ENCODE measurements at regions of chr13 and their contacts with region 1.

Region 1: GRCh38 chr13:41668130-41668757 is 210.9 kb downstream of the RGCC start:
- DNase-seq: peak; percentile 52
- H3K4me3 Mint-ChIP-seq: no peak overlapping the region
- H3K27ac Mint-ChIP-seq: no peak overlapping the region
- H3K4me1 Mint-ChIP-seq: no peaks in the 10 kb centered on the region
- H3K27me3 Mint-ChIP-seq: no peaks in the 10 kb centered on the region

Region 2: GRCh38 chr13:41658056-41658661 is 10.1 kb before region 1 on chr13:
- CTCF ChIA-PET with region 1: interaction called, 10 read pairs
- intact Hi-C with region 1: no loop called
- DNase-seq: no peak
- H3K4me3 Mint-ChIP-seq: no peak overlapping the region
- H3K27ac Mint-ChIP-seq: no peak overlapping the region
- H3K4me1 Mint-ChIP-seq: peaks cover 19% of the 10 kb centered on the region
- H3K27me3 Mint-ChIP-seq: no peaks in the 10 kb centered on the region

Region 3: DNA sequence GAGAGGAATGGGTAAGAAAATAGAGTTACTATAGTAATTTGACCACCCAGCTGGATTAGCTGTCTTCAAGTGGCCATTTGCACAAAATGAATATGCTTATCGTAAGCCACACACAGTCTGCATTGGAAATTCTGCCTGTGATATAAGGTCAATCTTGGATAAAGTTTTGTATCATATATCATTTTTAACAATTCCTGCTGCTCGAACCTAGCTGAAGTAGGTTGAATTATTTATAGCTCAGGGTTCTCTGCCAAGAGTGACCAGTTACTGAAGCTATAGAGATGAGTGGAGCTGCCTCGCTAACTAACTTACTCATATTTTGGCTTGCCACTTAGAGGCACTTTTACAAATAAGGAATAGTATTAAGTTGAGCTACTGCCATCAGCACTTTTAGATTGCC is 10.0 kb after region 1 on chr13:
- CTCF ChIA-PET with region 1: interaction called, 10 read pairs
- intact Hi-C with region 1: no loop called
- DNase-seq: no peak
- H3K4me3 Mint-ChIP-seq: no peak overlapping the region
- H3K27ac Mint-ChIP-seq: no peak overlapping the region
- H3K4me1 Mint-ChIP-seq: peaks cover 8% of the 10 kb centered on the region
- H3K27me3 Mint-ChIP-seq: no peaks in the 10 kb centered on the region

Region 4: DNA sequence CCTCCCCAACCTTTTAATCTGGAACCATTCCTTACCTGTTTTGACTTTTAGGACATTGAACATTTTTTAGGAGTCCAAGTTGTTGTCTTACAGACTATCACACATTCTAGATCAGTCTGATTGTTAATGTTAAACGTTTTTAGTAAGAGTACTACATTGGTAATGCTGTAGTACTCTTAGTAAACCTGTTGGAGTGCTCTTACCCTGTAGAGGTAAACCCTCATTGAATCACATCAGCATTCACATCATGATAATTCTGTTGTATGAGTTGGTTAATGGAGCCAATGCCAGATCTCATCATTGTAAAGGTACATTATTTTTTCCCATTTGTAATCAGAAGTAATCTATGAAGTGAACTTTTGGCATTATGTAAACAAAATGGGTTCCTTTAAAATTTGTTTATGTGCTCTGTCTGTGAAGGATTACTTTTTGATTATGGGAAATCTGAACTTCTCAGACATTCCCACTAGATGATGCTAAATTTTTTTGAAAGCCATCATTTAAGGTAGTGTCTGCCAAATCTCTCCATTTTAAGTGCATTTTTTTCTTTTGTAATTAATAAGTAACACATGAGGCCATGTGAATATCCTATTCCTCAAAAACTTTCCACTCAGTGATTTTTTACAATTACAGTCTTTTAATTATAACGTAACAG is 237.5 kb after region 1 on chr13:
- CTCF ChIA-PET with region 1: interaction called, 4 read pairs
- intact Hi-C with region 1: loop called (anchors 10 kb)
- DNase-seq: no peak
- H3K4me3 Mint-ChIP-seq: no peak overlapping the region
- H3K27ac Mint-ChIP-seq: no peak overlapping the region
- H3K4me1 Mint-ChIP-seq: peaks cover 24% of the 10 kb centered on the region
- H3K27me3 Mint-ChIP-seq: no peaks in the 10 kb centered on the region

Region 5: DNA sequence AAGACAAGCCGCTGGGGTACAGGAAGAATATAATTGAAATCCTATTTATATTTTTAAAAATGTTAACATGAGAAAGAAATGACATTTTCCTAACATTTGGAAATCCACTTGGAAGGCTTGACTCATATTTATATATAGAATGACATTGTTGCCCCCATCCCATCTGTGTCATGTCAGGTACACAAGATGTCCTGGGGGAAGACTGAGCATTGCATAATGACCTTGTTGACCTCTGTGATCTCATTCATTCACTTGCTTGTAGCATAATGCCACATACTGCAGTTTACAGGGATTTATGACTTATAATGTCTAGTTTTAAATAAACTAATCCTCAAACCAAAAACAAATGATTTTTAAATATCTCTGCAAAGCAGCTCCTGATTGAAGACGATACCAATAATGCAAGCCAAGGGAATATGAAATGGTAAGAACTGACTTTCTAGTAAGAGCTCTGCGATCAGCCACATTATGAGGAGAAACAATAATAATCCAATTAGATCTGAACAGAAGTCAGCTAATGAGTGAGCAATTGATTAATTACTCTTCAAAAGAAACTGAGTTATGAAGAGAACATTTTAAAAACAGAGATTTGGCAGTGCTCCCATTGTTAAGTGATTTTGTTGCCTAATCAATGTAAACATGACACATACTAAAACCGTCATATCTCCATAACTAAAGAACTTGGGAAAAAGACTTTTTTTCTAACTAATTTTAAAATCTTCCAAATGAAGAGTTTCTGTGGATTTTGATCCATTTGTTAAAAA is 313.9 kb after region 1 on chr13:
- CTCF ChIA-PET with region 1: no interaction called
- intact Hi-C with region 1: loop called (anchors 2 kb)
- DNase-seq: no peak
- H3K4me3 Mint-ChIP-seq: no peak overlapping the region
- H3K27ac Mint-ChIP-seq: no peak overlapping the region
- H3K4me1 Mint-ChIP-seq: peaks cover 4% of the 10 kb centered on the region
- H3K27me3 Mint-ChIP-seq: peaks cover 7% of the 10 kb centered on the region

Region 6: GRCh38 chr13:42110410-42111155 is 442.3 kb after region 1 on chr13:
- CTCF ChIA-PET with region 1: interaction called, 57 read pairs
- intact Hi-C with region 1: loop called (anchors 1 kb)
- DNase-seq: peak; percentile 62
- H3K4me3 Mint-ChIP-seq: no peak overlapping the region
- H3K27ac Mint-ChIP-seq: no peak overlapping the region
- H3K4me1 Mint-ChIP-seq: peaks cover 7% of the 10 kb centered on the region
- H3K27me3 Mint-ChIP-seq: no peaks in the 10 kb centered on the region

Region 7: DNA sequence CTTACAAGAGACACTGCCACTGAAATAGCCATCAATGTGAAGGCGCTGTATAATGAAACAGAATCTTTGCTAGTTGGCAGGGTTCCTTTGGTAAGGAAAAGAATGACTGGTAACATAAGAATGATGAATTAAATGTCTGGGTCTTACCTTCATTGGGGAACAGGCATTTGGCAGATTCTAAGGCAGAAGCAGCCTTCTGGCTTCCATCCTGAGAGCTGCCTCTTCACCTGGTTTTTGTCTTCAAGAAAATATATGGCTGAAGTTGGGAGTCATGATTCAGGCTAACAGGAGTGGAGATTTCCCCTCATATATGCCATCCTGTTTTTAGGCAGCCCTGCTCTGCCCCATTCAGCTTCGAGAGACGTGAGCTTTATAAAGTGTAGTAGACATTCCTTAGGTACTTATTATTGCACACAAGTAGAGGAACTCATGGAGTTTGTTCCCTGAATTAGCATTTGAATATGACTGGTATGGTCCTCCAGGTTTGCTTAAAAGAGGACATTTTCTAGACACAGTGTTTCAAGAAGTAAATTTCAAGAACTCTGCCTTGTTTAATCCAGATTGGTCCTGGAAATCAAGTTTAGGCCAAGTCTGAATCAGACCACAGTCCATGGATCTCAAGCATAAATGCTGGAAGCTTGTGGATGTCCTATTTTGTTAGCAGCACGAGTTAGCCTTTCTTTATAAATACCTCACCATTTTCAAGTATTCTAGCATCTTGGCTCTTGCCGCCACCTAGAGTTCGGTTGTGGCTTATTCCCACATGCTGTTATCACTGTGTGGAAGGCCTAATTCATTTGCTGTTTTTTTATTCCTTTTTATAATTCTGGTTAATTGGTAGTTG is 547.6 kb after region 1 on chr13:
- CTCF ChIA-PET with region 1: interaction called, 3 read pairs
- intact Hi-C with region 1: loop called (anchors 1 kb)
- DNase-seq: peak; percentile 62
- H3K4me3 Mint-ChIP-seq: no peak overlapping the region
- H3K27ac Mint-ChIP-seq: no peak overlapping the region
- H3K4me1 Mint-ChIP-seq: no peaks in the 10 kb centered on the region
- H3K27me3 Mint-ChIP-seq: no peaks in the 10 kb centered on the region

Measured in activated naive CD4-positive, alpha-beta T cell treated with anti-CD3 and anti-CD28 coated beads for 36 hours (primary cell).